Activated B cell treated with CpG ODN at 0.5 μM for 24 hours (primary cell): ENCODE measurements at regions of chr6 and their contacts with region 1.

Region 1: DNA sequence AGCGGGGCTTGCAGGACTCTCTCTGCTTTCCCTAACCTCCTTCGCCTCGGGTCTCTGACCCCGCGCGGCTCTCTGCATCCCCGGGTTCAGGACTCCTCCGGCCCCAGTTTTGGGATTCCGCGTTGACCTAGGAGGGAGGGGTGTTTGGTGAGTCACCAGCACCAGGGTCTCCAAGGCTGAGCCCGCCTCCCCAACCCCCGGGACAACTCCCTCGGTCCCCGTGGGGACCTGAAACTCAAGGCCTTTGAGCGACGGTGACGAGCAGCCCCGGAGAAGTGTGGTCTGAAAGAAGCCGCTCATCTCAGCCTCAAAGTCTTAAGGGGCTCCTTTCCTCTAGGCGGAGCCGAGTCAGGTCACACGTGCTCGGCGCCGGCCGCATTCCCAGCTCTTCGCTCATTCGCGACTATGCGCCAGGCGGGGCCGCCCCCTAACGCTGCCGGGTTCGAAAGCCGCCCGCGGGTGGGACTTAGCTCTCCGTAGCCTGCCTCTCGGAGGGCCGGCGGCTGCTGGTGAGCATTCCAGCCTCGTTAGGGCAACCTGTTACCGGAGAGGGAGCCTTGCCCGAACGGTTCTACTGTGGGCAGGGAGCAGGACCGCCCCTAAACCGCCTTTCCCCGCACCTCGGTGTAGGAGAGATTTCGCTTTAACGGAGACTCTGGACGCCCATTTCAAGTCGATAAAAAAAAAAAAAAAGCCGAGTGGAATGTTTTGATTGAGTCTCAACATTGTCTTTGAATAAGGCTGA is 3.0 kb upstream of the PRDM13 start:
- DNase-seq: no peak
- ATAC-seq: peak; percentile 54
- H3K4me3 Mint-ChIP-seq: peak overlapping the region; percentile 76
- H3K27ac Mint-ChIP-seq: no peak overlapping the region
- H3K4me1 Mint-ChIP-seq: peaks cover 30% of the 10 kb centered on the region
- H3K27me3 Mint-ChIP-seq: peaks cover 74% of the 10 kb centered on the region
- CTCF ChIP-seq: no peak

Region 2: DNA sequence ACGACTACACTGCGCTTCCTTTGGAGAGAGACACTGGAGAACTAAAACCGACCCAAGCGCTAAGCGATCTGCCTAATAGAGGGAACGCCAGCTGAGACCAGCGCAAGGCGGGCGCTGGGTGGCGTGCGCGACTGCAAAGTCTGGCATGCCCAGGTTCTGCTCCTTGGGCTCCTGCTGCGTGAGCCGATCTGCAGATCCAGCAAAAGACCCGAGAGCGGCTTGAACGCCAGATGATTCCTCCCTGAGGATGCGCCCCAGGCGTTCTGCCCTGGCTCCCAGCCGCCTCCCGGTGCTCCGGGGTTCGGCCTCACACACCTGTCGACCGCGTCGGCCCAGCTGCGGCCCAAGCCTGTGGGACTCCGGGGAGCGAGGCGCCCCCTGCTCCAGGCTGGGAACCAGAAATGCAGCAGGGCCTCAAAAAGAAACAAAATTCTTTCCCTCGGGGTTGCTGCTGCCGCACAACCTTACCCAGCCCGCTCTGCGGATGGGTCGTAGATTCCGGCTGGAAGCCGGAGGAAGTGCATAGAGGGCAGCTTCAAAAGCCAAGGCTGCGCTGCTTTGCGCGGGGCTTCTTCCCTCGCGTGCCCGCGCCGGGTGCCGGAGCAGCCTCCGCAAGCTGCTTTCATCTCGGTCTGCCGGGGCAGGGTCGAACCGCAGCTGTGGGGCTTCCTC is 14.8 kb before region 1 on chr6:
- CTCF ChIA-PET with region 1: interaction called, 12 read pairs
- POLR2A ChIA-PET with region 1: interaction called, 3 read pairs
- intact Hi-C with region 1: loop called (anchors 1 kb)
- DNase-seq: peak; percentile 38
- ATAC-seq: peak; percentile 83
- H3K4me3 Mint-ChIP-seq: peak overlapping the region; percentile 86
- H3K27ac Mint-ChIP-seq: peak overlapping the region; percentile 46
- H3K4me1 Mint-ChIP-seq: peaks cover 30% of the 10 kb centered on the region
- H3K27me3 Mint-ChIP-seq: peaks cover 56% of the 10 kb centered on the region
- CTCF ChIP-seq: no peak

Region 3: DNA sequence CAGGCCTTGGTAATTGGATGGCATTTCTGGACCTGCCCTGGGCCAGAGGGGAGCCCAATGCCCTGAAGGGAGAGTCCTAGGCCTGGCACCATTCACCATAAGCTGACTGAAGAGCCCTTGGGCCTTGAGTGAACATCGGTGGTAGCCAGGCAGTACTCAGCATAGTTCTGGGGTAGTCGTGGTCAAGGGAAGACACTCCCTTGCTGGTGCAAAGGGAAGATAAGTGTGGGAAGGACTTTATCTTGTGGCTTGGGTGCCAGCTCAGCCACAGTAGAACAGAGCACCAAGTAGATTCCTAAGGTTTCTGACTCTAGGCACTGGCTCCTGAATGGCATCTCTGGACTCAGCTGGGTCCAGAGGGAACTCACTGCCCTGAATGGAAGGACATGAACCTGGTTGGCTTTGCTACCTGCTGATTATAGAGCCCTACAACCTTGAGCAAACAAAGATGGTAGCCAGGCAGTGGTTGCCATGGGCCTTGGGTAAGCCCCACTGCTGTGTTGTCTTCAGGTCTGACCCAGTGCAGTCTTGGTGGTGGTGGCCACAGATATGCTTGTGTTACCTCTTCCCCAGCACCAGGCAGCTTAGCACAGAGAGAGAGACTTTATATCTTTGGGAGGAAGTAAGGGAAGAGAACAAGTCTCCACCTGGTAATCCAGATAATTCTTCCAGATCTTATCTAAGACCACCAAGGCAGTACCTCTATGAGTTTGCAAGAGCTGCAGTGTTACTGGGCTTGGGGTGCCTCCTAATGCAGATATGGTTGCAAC is 86.5 kb after region 1 on chr6:
- CTCF ChIA-PET with region 1: no interaction called
- POLR2A ChIA-PET with region 1: no interaction called
- intact Hi-C with region 1: no loop called
- DNase-seq: no peak
- ATAC-seq: no peak
- H3K4me3 Mint-ChIP-seq: no peak overlapping the region
- H3K27ac Mint-ChIP-seq: no peak overlapping the region
- H3K4me1 Mint-ChIP-seq: no peaks in the 10 kb centered on the region
- H3K27me3 Mint-ChIP-seq: peaks cover 7% of the 10 kb centered on the region
- CTCF ChIP-seq: no peak

Region 4: GRCh38 chr6:99746261-99746895 is 142.8 kb after region 1 on chr6:
- CTCF ChIA-PET with region 1: no interaction called
- POLR2A ChIA-PET with region 1: no interaction called
- intact Hi-C with region 1: no loop called
- DNase-seq: no peak
- ATAC-seq: peak; percentile 82
- H3K4me3 Mint-ChIP-seq: no peak overlapping the region
- H3K27ac Mint-ChIP-seq: no peak overlapping the region
- H3K4me1 Mint-ChIP-seq: no peaks in the 10 kb centered on the region
- H3K27me3 Mint-ChIP-seq: peaks cover 21% of the 10 kb centered on the region
- CTCF ChIP-seq: peak; percentile 16

Region 5: DNA sequence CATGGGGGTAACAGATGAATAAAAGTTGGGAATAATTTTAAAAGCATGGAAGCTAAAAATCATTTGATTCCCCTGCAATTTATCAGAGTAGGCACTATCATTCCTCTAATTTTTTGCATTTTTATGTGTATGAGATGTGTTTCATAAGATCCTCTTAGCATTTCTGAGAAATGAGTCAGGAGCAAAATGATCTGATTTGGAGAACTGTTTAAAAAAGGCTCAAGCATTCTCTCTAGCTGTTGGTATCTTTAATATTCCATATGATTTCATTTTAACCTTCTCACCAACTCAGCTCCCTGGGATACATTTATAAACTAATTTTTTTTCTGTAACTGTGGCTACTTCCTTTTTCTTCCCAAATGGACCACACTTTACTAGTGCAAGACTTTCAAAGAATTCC is 329.5 kb after region 1 on chr6:
- CTCF ChIA-PET with region 1: no interaction called
- POLR2A ChIA-PET with region 1: no interaction called
- intact Hi-C with region 1: no loop called
- DNase-seq: no peak
- ATAC-seq: no peak
- H3K4me3 Mint-ChIP-seq: no peak overlapping the region
- H3K27ac Mint-ChIP-seq: no peak overlapping the region
- H3K4me1 Mint-ChIP-seq: no peaks in the 10 kb centered on the region
- H3K27me3 Mint-ChIP-seq: no peaks in the 10 kb centered on the region
- CTCF ChIP-seq: no peak